ENCODE measurements at regions of chr4 and their contacts with region 1.

Region 1: GRCh38 chr4:38620790-38621684 is 43.0 kb upstream of the KLF3 start:
- DNase-seq: peak; percentile 81 to 90
- H3K4me3 ChIP-seq: no peak overlapping the region
- H3K4me3 Mint-ChIP-seq: peak overlapping the region; percentile 65
- H3K27ac Mint-ChIP-seq: peak overlapping the region; percentile 65
- H3K4me1 ChIP-seq: peaks cover 23% of the 10 kb centered on the region
- H3K4me1 Mint-ChIP-seq: peaks cover 21% of the 10 kb centered on the region
- H3K27me3 ChIP-seq: no peaks in the 10 kb centered on the region
- H3K27me3 Mint-ChIP-seq: no peaks in the 10 kb centered on the region
- CTCF ChIP-seq: no peak

Region 2: DNA sequence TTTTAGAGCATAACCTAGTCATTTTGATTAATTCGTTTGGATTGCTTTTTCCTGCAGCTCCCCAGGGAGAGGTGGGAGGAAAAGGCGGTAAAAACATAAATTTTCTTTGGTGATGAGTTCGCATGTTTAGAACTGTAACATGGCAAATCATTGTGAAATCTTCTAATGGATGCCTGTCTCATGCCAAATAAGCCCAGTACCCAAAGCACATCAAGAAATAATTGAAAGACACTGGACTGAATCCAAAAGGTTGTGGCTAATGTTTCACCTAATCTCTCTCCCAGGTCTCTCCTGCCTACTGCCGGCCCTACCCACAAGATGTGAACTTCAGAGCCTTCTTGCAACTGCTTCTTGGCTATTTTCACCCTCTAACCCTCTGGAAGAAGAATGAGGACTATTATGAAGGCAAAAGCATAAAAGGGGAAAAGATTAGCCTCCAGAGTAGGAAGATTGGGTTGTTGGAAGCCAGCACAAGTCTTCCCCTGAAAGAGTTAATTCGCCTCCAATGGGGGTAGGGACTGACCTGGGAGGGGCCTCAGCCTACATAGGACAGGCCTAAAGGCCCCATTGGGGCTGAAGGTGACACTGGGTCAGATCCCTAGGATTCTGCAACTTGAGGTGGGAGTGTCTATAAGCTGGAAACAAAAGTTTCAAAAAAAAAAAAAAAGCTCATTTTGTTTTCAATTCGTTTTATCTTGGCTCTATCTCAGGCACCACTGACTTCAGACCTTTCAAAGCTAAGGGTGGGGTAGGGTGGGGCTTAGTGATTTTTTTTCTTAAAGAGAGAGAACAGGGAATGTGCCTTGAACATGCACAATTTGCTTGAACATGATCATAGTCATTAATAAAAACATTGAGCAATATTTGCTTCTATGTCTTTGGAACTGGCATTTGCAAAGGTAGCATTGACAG is 235.7 kb before region 1 on chr4:
- CTCF ChIA-PET with region 1: no interaction called
- POLR2A ChIA-PET with region 1: no interaction called
- intact Hi-C with region 1: loop called (anchors 1 kb)
- DNase-seq: peak; percentile 44 to 81
- H3K4me3 ChIP-seq: no peak overlapping the region
- H3K4me3 Mint-ChIP-seq: peak overlapping the region; percentile 23
- H3K27ac Mint-ChIP-seq: peak overlapping the region; percentile 32
- H3K4me1 ChIP-seq: peaks cover 17% of the 10 kb centered on the region
- H3K4me1 Mint-ChIP-seq: peaks cover 7% of the 10 kb centered on the region
- H3K27me3 ChIP-seq: no peaks in the 10 kb centered on the region
- H3K27me3 Mint-ChIP-seq: no peaks in the 10 kb centered on the region
- CTCF ChIP-seq: no peak

Region 3: DNA sequence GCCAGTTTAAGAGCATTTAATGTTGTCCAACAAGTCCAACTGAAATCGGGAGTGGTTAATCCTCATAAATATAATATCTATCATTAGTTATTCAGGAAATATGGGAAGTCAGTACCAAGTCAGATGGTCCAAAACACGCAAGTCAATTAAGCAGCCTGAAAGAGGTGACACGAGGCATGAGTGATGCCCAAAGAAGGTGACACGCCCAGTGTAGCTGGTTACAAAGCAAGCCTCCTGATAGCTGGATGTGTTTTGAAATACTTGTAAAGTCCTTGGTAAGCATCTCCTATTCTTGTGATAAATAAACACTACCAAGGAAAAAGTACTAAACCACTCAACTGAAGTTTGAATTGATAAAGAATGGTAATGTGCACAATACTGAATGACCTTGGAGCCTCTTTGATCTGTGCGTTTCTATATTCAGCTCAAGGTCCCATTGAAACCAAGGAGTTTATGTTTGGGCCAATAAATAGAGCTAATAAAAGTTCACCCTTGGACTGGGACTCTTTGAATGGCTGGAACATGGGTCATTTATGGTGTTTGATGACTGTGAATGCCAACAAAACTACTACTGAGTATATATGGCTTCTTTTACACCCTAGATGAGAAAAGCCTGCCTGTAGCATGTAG is 50.3 kb before region 1 on chr4:
- CTCF ChIA-PET with region 1: interaction called, 4 read pairs
- POLR2A ChIA-PET with region 1: no interaction called
- intact Hi-C with region 1: loop called (anchors 1 kb)
- DNase-seq: peak; percentile 44 to 65
- H3K4me3 ChIP-seq: no peak overlapping the region
- H3K4me3 Mint-ChIP-seq: no peak overlapping the region
- H3K27ac Mint-ChIP-seq: peak overlapping the region; percentile 7
- H3K4me1 ChIP-seq: no peaks in the 10 kb centered on the region
- H3K4me1 Mint-ChIP-seq: peaks cover 2% of the 10 kb centered on the region
- H3K27me3 ChIP-seq: no peaks in the 10 kb centered on the region
- H3K27me3 Mint-ChIP-seq: no peaks in the 10 kb centered on the region
- CTCF ChIP-seq: no peak

Measured in Caco-2 (cell line).